ENCODE measurements at regions of chr1 and their contacts with region 1.

Region 1: DNA sequence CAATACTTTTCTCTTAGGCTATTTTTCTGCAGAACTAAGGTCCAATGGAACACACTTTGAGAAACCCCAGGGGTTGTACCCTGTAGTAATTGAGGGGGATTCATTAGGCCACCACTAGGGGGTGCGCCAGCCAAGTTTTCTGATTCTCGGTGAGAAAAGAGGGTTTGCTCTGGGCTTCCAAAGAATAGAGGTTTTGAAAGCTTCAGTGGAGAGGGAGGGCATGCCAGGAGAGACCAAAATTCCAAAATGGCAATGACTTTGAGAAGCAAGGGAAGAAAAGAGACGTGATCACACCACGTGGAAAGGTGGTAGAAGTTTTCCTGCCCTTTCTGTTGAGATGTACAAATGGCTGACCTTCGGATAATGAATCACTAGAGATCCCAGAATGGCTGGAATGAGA is 323.3 kb downstream of the RPS6KC1 start:
- DNase-seq: peak; percentile 59
- H3K4me3 ChIP-seq: no peak overlapping the region
- H3K27ac ChIP-seq: no peak overlapping the region
- H3K4me1 ChIP-seq: no peaks in the 10 kb centered on the region
- H3K27me3 ChIP-seq: no peaks in the 10 kb centered on the region
- CTCF ChIP-seq: peak; percentile 68 to 85 (median 70)
- EP300 ChIP-seq: no peak
- POLR2A ChIP-seq: no peak

Region 2: GRCh38 chr1:213303286-213303685 is 71.1 kb before region 1 on chr1:
- in situ Hi-C with region 1: loop called in 1 of 4 experiments (anchors 10 kb)
- intact Hi-C with region 1: no loop called
- DNase-seq: no peak
- H3K4me3 ChIP-seq: no peak overlapping the region
- H3K27ac ChIP-seq: no peak overlapping the region
- H3K4me1 ChIP-seq: no peaks in the 10 kb centered on the region
- H3K27me3 ChIP-seq: no peaks in the 10 kb centered on the region
- CTCF ChIP-seq: no peak
- EP300 ChIP-seq: no peak
- POLR2A ChIP-seq: no peak

Region 3: GRCh38 chr1:214123061-214123784 is 748.9 kb after region 1 on chr1:
- in situ Hi-C with region 1: loop called in 3 of 4 experiments (anchors 10 to 25 kb)
- intact Hi-C with region 1: no loop called
- DNase-seq: peak; percentile 48
- H3K4me3 ChIP-seq: no peak overlapping the region
- H3K27ac ChIP-seq: no peak overlapping the region
- H3K4me1 ChIP-seq: peaks cover 0 to 3% (median 0%) of the 10 kb centered on the region in 4 donors
- H3K27me3 ChIP-seq: no peaks in the 10 kb centered on the region
- CTCF ChIP-seq: peak; percentile 41 to 74 (median 55)
- EP300 ChIP-seq: no peak
- POLR2A ChIP-seq: no peak

Measured in transverse colon (tissue), 4 donors.